Prostate gland (tissue), 2 donors: ENCODE measurements at regions of chr9 and their contacts with region 1.

Region 1: DNA sequence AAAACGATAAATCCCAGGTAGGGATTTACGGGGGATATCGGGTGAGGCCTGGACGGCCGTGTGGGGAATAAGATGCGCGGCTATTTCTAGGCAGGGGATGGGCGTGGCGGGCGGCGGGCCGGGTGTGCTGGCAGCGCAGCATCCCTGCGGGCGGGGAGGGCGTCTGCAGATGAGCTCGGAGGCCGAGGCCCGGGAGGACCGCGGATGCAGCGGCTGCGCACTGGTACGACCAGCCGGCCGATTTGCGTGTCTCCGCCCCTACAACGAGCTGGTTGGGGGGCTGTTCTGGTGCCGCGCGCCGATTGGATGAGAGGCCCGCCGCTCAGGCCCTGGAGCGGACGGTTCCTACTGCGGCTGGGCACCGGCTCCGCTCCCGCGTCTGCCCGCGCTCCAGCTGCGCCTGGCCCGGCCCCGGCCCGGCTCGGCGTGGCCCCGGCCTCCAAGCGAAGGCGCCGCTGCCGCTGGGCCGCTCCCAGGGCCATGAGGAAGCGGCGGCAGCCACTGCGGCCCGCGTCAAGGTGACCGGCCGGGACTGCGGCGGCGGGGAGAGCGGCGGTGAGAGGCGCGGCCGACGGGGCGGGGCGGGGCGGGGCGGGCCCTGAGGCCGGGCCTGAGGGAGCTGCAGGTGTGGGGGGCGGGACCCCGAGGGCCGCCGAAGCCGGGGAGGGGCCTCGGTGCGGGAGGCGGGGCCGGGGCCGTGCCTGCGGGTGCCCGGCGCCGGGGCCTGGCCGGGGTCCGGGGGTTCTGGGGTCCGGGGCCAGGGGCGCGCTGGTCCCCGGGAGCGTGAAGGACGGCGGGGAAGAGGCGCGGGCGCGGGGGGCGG is at the start of gene RALGPS1:
- DNase-seq: peak; percentile 95
- H3K4me3 ChIP-seq: peak within 1 kb of the TSS; percentile 56 to 78
- H3K27ac ChIP-seq: peak within 1 kb of the TSS; percentile 63 to 83
- H3K4me1 ChIP-seq: no peaks in the 10 kb centered on the region
- H3K27me3 ChIP-seq: no peaks in the 10 kb centered on the region
- CTCF ChIP-seq: peak in 2 of 4 experiments; percentile 19 to 28
- POLR2A ChIP-seq: peak; percentile 21
- total RNA-seq, gene RALGPS1: 14.7 to 20.7 TPM

Region 2: DNA sequence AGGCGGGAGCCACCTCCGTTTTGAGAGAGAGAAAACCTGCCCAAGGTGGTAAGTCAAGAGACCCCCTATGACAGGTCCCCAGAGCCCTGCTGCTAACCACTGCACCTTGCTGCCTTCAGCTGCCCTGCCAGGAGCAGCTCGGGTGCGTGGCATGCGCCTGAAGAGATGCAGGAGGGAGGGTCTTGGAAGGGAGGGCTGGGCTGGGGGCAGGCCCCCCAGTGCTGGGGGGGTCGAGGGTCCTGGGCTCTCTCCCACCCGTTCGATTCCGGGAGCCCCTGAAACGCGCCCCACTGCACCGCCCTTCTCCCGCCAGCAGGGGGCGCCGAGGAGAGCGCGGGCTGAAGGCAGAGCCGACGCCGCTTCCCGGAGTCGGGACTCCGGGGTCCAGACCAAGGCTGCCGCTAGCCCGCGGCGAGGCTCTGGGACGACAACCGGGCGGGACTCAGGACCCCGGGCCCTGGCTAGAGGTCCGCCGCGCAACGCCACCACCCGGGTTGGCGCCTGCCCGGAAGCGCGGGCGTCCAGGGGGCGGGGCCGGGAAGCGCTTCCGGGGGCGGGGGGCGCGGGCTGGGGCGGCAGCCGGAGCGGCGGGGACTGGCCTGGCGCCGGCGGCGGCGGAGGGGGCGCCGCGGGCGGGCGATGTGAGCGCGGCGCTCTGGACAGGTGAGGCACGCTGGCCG is 54.5 kb before region 1 on chr9 and contains the start of gene ZBTB34:
- intact Hi-C with region 1: loop called (anchors 5 kb)
- DNase-seq: peak; percentile 39
- H3K4me3 ChIP-seq: peak within 1 kb of the TSS; percentile 91 to 96
- H3K27ac ChIP-seq: peak within 1 kb of the TSS; percentile 93 to 94
- H3K4me1 ChIP-seq: peaks cover 10% of the 10 kb centered on the region
- H3K27me3 ChIP-seq: no peaks in the 10 kb centered on the region
- CTCF ChIP-seq: peak; percentile 98 to 100 (median 100)
- POLR2A ChIP-seq: no peak
- total RNA-seq, gene ZBTB34: 4.5 to 10.8 TPM

Region 3: GRCh38 chr9:126965541-126966428 is 51.1 kb after region 1 on chr9:
- intact Hi-C with region 1: no loop called
- DNase-seq: peak; percentile 36
- H3K4me3 ChIP-seq: no peak overlapping the region
- H3K27ac ChIP-seq: no peak overlapping the region
- H3K4me1 ChIP-seq: no peaks in the 10 kb centered on the region
- H3K27me3 ChIP-seq: no peaks in the 10 kb centered on the region
- CTCF ChIP-seq: peak; percentile 54 to 71 (median 62)
- POLR2A ChIP-seq: no peak